HEK293T (cell line): ENCODE measurements at regions of chr11 and their contacts with region 1.

Region 1: DNA sequence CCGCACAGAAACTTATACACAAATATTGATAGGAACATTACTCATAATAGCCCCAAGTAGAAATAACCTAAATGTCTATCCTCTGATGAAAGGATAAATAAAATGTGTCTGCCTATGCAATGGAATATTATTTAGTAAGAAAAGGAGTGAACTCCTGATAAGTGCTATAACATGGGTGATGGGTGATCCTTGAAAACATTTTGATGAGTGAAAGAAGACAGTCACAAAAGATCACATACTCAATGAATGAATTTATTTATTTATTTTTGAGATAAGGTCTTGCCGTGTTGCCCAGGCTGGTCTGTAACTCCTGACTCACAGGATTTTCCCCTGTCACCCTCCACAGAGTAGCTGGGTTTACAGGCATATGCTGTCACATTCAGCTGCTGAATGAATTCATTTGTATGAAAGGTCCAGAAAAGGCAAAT is 17.3 kb downstream of the RNF121 start:
- DNase-seq: no peak

Region 2: GRCh38 chr11:71928737-71929452 is 17.3 kb before region 1 on chr11 and contains the start of gene RNF121:
- CTCF ChIA-PET with region 1: no interaction called
- POLR2A ChIA-PET with region 1: interaction called, 16 read pairs
- DNase-seq: peak; percentile 96

Region 3: GRCh38 chr11:72091005-72091691 is 145.0 kb after region 1 on chr11:
- CTCF ChIA-PET with region 1: no interaction called
- POLR2A ChIA-PET with region 1: no interaction called
- DNase-seq: peak; percentile 73